ENCODE measurements at regions of chr16 and their contacts with region 1.

Region 1: GRCh38 chr16:50326949-50327402 is 41.8 kb downstream of the BRD7 start:
- DNase-seq: peak; percentile 81
- H3K4me3 Mint-ChIP-seq: no peak overlapping the region
- H3K27ac Mint-ChIP-seq: peak overlapping the region; percentile 45
- H3K4me1 Mint-ChIP-seq: peaks cover 59% of the 10 kb centered on the region
- H3K27me3 Mint-ChIP-seq: no peaks in the 10 kb centered on the region

Region 2: DNA sequence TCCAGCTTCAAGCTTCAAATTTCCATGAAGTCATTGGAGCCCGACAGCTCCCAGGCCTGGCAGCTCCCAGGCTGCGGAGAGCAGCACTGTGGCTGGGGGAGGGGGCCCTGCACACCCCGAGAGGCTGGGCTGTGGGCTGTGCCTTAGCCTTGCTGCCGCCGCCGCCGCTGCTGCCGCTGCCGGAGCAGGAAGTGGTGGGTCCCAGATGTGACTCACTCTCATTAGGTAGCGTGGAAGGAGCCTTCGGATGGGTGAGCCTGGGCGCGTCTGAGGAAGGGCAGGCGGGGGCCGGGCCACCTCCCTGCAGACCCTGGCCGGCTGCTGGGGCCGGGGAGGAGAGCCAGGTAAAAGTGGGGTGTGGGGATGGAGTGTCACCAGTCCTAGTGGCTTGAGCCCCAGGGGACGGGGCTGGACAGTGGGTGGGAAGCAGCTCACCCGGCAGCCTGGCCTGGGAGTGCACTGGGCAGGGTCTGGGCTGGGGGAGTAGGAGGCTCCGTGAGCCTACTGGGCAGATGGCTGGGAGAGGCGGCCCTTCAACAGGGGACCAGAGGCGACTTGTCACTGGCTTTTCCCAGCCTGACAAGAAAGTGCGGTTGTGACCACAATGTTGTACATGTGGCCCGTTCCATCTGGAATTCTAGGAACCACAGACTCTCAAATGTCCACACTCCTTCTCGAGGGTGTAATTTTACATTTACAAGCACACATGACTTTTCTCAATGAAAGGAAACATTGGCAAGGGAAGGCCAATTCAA is 60.5 kb before region 1 on chr16 and contains the start of gene ADCY7:
- CTCF ChIA-PET with region 1: interaction called, 4 read pairs
- POLR2A ChIA-PET with region 1: interaction called, 3 read pairs
- intact Hi-C with region 1: loop called (anchors 1 kb)
- DNase-seq: peak; percentile 91
- H3K4me3 Mint-ChIP-seq: peak within 1 kb of the TSS; percentile 94
- H3K27ac Mint-ChIP-seq: peak within 1 kb of the TSS; percentile 97
- H3K4me1 Mint-ChIP-seq: peaks cover 71% of the 10 kb centered on the region
- H3K27me3 Mint-ChIP-seq: no peaks in the 10 kb centered on the region
- total RNA-seq, gene ADCY7: 100.0 to 107 TPM

Region 3: DNA sequence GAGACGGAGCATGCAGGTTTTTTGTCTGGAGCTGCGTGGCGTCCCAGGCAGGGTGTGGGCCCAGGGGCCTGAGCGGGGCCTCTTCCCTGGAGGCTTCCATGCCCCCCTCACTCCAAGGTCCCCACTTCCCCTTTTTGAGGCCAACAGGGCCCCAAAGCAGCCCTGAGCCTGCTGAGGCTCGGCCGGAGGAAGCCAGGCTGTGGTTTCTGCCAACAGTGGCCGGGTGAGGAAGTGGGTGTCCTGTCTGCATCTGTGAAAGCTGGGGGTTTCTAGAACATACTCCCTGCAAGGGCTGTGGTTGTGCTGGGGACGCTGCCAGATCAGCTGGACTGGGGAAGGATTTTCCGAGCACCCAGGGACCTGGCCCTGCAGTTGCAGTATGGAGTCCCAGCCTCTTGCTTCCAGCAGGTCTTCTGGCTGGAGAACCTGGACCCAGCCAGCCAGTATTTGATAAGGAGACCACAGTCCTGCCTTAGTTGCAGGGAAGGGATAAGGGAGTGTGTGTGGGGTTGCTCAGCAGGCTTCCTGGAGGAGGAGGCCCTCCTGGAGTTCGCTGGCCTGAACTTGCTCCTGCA is 44.9 kb before region 1 on chr16:
- CTCF ChIA-PET with region 1: interaction called, 17 read pairs
- POLR2A ChIA-PET with region 1: interaction called, 3 read pairs
- intact Hi-C with region 1: no loop called
- DNase-seq: peak; percentile 76
- H3K4me3 Mint-ChIP-seq: peak overlapping the region; percentile 18
- H3K27ac Mint-ChIP-seq: peak overlapping the region; percentile 65
- H3K4me1 Mint-ChIP-seq: peaks cover 86% of the 10 kb centered on the region
- H3K27me3 Mint-ChIP-seq: no peaks in the 10 kb centered on the region

Region 4: DNA sequence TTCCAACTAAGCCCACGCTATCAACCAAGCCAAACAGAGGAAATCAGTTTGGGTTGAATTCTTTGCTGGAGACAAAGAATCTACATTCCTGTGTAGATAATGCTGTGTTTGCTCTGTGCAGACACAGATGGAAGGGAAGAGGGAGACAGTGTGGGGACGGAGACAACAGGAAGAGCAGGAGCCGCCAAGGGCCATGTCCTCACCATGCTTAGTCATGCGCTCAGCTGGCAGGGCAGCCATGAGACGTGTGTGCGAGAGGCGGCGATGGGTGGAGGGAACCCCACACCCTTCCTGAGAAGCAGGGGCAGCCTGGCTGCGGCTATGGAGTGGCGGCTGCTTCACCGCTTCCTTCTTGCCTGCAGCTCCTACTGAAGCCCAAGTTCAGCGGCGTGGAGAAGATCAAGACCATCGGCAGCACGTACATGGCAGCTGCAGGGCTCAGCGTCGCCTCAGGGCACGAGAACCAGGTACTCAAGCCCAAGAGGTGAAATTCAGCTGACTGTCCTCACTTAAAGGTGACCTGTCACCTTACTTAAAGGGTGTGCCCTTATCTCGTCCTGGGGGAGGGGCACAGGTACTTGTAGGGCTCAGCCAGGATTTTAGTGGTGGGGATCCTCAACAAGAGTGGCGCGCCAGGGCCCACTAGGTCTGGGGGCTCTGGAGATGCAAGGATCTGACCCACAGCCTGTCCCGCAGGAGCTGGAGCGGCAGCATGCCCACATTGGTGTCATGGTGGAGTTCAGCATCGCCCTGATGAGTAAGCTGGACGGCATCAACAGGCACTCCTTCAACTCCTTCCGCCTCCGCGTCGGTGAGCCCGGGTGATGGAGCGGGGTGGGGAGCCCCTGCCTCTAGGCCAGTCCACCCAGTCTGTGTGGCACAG is 13.1 kb before region 1 on chr16:
- CTCF ChIA-PET with region 1: interaction called, 27 read pairs
- POLR2A ChIA-PET with region 1: interaction called, 3 read pairs
- intact Hi-C with region 1: no loop called
- DNase-seq: peak; percentile 66
- H3K4me3 Mint-ChIP-seq: no peak overlapping the region
- H3K27ac Mint-ChIP-seq: peak overlapping the region; percentile 78
- H3K4me1 Mint-ChIP-seq: peaks cover 26% of the 10 kb centered on the region
- H3K27me3 Mint-ChIP-seq: no peaks in the 10 kb centered on the region

Region 5: DNA sequence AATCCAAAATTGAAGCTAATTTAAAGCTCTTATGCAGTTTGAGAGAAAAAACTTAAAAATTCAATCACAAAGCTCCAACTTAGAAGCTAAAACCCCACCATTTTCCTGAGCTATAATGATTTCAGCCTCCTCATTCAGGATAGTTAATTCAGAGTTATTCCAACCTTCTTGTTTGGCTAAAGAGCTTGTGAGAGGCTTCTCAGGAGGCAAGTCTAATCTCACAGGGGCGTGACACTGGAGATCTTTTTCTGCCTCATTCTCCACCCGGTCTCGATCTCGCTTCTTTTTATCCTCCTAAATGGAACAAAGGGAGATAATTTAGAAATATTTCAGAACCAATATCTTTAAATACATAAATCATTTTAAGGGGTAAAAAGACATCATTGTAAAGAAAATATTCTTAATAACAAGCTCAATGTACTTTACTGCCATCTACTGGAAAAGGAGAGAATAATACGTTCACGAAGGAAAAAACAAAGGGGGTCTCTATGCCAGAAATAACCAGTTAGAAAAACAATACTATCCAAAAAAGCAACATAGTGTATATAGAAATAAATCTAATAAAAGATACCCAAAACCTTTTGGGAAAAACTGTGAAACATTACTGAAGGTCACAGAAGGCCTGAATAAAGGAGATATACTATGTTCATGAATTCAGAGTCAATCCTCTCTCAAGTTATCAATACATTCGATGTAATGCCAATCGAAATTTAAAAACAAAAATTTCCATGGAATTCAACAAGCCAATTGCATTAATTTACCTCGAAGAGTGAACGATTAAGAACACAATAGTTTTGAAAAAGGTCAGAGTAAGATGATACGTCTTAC is 27.9 kb after region 1 on chr16:
- CTCF ChIA-PET with region 1: interaction called, 302 read pairs
- POLR2A ChIA-PET with region 1: interaction called, 6 read pairs
- intact Hi-C with region 1: loop called (anchors 1 kb)
- DNase-seq: no peak
- H3K4me3 Mint-ChIP-seq: no peak overlapping the region
- H3K27ac Mint-ChIP-seq: no peak overlapping the region
- H3K4me1 Mint-ChIP-seq: peaks cover 30% of the 10 kb centered on the region
- H3K27me3 Mint-ChIP-seq: no peaks in the 10 kb centered on the region

Region 6: GRCh38 chr16:50448501-50448900 is 121.5 kb after region 1 on chr16:
- CTCF ChIA-PET with region 1: no interaction called
- POLR2A ChIA-PET with region 1: no interaction called
- intact Hi-C with region 1: no loop called
- DNase-seq: peak; percentile 2
- H3K4me3 Mint-ChIP-seq: no peak overlapping the region
- H3K27ac Mint-ChIP-seq: no peak overlapping the region
- H3K4me1 Mint-ChIP-seq: peaks cover 4% of the 10 kb centered on the region
- H3K27me3 Mint-ChIP-seq: no peaks in the 10 kb centered on the region

Region 7: DNA sequence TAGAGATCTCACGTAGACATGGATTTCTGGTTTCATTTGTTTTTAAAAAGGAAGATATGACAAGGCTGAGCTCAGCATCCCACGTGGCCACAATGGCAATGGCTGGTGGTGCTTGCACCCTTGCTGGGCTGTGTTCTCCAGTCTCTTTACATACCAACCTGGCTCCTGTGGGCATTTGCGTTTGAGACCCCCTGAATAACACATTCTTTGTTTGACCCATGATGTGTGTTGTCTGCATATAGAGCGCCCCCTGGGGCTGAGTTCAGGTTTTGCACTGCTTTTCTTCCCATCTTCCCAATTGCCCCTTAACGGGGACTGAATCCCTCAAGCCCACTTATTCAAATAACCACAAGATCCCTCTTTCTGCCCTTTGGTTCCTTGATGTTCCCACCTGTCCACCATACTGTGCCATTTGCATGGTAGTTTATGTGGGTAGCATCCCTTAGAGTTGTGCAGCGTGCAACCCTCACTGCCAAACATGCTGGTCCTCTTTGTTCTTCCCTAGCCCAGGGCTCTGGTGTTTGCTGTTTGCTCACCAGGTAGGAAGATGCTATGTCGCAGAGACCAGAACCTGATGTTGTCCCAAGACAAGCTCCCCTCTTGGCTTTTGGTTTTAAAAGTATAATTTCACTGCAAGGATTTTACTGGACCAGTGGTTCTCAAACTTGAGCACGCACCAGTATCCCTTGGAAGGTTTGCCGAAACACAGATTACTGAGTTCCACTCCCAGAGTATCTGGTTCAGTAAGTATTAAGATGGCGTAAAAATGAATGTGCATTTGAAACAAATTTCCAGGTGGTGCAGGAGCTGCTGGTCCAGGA is 182.8 kb after region 1 on chr16:
- CTCF ChIA-PET with region 1: interaction called, 15 read pairs
- POLR2A ChIA-PET with region 1: no interaction called
- intact Hi-C with region 1: no loop called
- DNase-seq: peak; percentile 66
- H3K4me3 Mint-ChIP-seq: no peak overlapping the region
- H3K27ac Mint-ChIP-seq: no peak overlapping the region
- H3K4me1 Mint-ChIP-seq: no peaks in the 10 kb centered on the region
- H3K27me3 Mint-ChIP-seq: no peaks in the 10 kb centered on the region

Measured in activated CD4-positive, alpha-beta memory T cell treated with anti-CD3 and anti-CD28 coated beads for 36 hours (primary cell).